Caco-2 (cell line): ENCODE measurements at regions of chr2 and their contacts with region 1.

Region 1: DNA sequence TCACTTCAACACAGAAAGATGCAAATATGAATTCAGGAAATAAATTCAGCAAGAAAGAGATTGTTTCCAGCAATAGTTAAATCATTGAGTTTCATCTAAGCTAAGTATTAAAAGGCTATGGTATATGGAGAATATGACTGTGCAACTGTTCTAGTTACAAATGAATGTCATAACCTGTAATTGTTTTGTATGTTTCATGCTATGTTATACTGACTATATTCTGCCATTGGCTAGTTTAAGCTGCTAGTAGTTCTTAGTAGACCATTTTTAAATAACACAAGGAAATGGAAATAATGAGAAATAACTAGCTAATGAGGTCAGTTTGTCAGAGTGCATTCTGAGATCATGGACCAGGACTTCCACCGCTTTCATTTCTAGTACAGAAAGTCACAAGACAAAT is 1154.9 kb upstream of the TMEFF2 start:
- DNase-seq: no peak
- H3K4me3 ChIP-seq: no peak overlapping the region
- H3K4me3 Mint-ChIP-seq: no peak overlapping the region
- H3K27ac Mint-ChIP-seq: no peak overlapping the region
- H3K4me1 ChIP-seq: peaks cover 4% of the 10 kb centered on the region; the same call in 1 of the 2 replicates
- H3K4me1 Mint-ChIP-seq: no peaks in the 10 kb centered on the region
- H3K27me3 ChIP-seq: no peaks in the 10 kb centered on the region
- H3K27me3 Mint-ChIP-seq: no peaks in the 10 kb centered on the region
- CTCF ChIP-seq: no peak

Region 2: GRCh38 chr2:193463011-193463410 is 113.4 kb after region 1 on chr2:
- CTCF ChIA-PET with region 1: no interaction called
- POLR2A ChIA-PET with region 1: no interaction called
- intact Hi-C with region 1: no loop called
- DNase-seq: no peak
- H3K4me3 ChIP-seq: no peak overlapping the region
- H3K4me3 Mint-ChIP-seq: no peak overlapping the region
- H3K27ac Mint-ChIP-seq: no peak overlapping the region
- H3K4me1 ChIP-seq: peaks cover 10% of the 10 kb centered on the region
- H3K4me1 Mint-ChIP-seq: peaks cover 11% of the 10 kb centered on the region
- H3K27me3 ChIP-seq: no peaks in the 10 kb centered on the region
- H3K27me3 Mint-ChIP-seq: no peaks in the 10 kb centered on the region
- CTCF ChIP-seq: no peak

Region 3: GRCh38 chr2:193539188-193539587 is 189.5 kb after region 1 on chr2:
- CTCF ChIA-PET with region 1: no interaction called
- POLR2A ChIA-PET with region 1: no interaction called
- intact Hi-C with region 1: no loop called
- DNase-seq: no peak
- H3K4me3 ChIP-seq: no peak overlapping the region
- H3K4me3 Mint-ChIP-seq: no peak overlapping the region
- H3K27ac Mint-ChIP-seq: no peak overlapping the region
- H3K4me1 ChIP-seq: peaks cover 29% of the 10 kb centered on the region
- H3K4me1 Mint-ChIP-seq: peaks cover 16% of the 10 kb centered on the region
- H3K27me3 ChIP-seq: no peaks in the 10 kb centered on the region
- H3K27me3 Mint-ChIP-seq: no peaks in the 10 kb centered on the region
- CTCF ChIP-seq: no peak

Region 4: DNA sequence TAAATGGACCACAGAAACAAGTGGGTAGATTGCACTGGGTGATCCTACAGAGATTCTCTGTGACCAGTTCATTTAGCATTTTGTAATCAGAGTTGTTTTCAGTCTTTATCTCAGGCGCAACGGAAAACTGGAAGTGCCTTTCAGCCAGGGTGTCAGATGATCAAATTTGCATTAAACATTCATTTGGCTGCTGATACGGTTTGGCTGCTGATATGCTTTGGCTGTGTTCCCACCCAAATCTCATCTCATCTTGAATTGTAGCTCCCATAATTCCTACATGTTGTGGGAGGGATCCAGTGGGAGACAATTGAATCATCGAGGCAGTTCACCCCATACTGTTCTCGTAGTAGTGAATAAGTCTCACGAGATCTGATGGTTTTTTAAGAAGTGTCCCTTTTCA is 241.2 kb after region 1 on chr2:
- CTCF ChIA-PET with region 1: no interaction called
- POLR2A ChIA-PET with region 1: interaction called, 12 read pairs
- intact Hi-C with region 1: no loop called
- DNase-seq: no peak
- H3K4me3 ChIP-seq: no peak overlapping the region
- H3K4me3 Mint-ChIP-seq: no peak overlapping the region
- H3K27ac Mint-ChIP-seq: no peak overlapping the region
- H3K4me1 ChIP-seq: no peaks in the 10 kb centered on the region
- H3K4me1 Mint-ChIP-seq: peaks cover 10% of the 10 kb centered on the region
- H3K27me3 ChIP-seq: no peaks in the 10 kb centered on the region
- H3K27me3 Mint-ChIP-seq: no peaks in the 10 kb centered on the region
- CTCF ChIP-seq: no peak